Activated CD8-positive, alpha-beta T cell treated with anti-CD3 and anti-CD28 coated beads, Interleukin-2, amount 10 ng/mL, durations not matched to agents 7 days and 5 days (primary cell): ENCODE measurements at regions of chr9 and their contacts with region 1.

Region 1: GRCh38 chr9:33374634-33375213 is 27.6 kb downstream of the AQP7 start:
- DNase-seq: peak; percentile 81
- ATAC-seq: peak; percentile 85
- H3K4me3 Mint-ChIP-seq: no peak overlapping the region
- H3K27ac Mint-ChIP-seq: peak overlapping the region; percentile 35
- H3K4me1 Mint-ChIP-seq: peaks cover 12% of the 10 kb centered on the region
- H3K27me3 Mint-ChIP-seq: no peaks in the 10 kb centered on the region

Region 2: GRCh38 chr9:33170464-33171415 is 204.0 kb before region 1 on chr9:
- CTCF ChIA-PET with region 1: no interaction called
- POLR2A ChIA-PET with region 1: no interaction called
- DNase-seq: peak; percentile 64
- ATAC-seq: no peak
- H3K4me3 Mint-ChIP-seq: no peak overlapping the region
- H3K27ac Mint-ChIP-seq: no peak overlapping the region
- H3K4me1 Mint-ChIP-seq: peaks cover 24% of the 10 kb centered on the region
- H3K27me3 Mint-ChIP-seq: no peaks in the 10 kb centered on the region

Region 3: DNA sequence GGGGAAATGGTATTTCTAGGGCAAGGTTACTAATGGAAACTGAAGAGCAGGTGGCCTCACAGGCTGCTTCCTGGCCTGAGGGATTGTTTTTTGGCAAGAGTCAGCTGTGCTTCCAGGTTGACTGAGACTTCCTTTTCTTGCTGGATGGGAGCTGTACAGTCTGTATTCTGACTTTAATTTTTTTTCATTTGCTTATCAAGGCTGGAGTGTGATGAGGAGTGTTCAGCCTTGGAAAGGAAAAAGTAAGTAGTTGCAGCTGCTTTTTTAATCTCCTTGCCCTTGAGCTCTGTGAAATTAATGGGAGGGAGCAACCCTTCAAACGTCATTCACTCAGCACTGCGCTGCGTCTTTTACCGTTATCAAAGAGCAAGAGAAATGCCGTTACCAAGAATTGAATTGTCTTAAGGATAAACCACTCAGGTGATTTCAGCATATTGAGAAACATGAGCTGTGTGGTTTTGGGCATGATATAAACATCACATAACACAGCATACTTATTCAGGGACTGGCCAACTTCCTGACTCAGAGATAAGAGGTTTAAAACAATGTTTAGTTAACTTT is 20.0 kb before region 1 on chr9:
- CTCF ChIA-PET with region 1: interaction called, 22 read pairs
- POLR2A ChIA-PET with region 1: no interaction called
- DNase-seq: no peak
- ATAC-seq: no peak
- H3K4me3 Mint-ChIP-seq: no peak overlapping the region
- H3K27ac Mint-ChIP-seq: peak overlapping the region; percentile 15
- H3K4me1 Mint-ChIP-seq: no peaks in the 10 kb centered on the region
- H3K27me3 Mint-ChIP-seq: no peaks in the 10 kb centered on the region

Region 4: DNA sequence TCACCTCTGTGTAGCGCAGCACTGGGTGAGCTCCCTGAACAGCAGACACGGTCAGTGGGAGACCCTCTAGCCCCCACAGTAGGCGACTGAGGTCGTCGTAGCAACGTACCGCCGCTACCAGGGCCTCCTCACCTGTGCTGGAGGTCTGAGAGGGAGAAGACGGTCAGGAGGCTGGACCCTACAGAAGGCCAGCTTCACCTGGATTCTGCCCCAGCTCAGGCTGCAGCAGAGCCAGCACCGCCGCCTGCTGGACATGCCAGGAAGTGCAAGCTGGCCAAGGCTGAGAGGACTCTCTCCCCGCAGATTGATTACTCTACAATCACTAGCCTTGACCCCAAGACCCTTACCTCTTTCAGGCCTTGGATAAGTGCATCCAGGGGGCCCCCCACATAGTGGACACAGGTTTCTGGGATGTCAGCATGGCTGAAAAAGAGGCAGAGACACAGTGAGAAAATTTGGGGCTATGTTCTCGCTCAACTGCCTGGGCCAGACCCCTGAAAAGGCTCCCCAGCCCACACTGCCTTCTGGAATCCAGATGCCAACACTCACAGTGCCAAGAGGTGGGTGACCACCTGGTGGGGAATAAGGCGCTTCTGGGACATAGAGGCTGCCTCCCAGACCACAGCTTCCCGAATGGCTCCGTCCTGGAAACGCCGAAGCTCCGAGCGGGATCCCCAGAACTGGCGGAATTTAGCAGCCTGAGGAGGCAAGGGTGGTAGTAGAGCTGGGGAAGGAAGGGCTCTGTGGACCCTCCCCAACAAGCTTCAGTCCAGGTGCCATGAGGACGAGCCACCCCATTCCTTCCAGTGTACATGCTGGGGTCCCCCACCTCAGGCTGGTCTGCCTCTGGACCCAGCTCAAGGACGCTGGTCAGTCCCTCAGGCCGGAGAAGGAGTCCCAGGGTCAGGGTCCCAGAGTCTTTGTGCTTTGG is 92.1 kb after region 1 on chr9:
- CTCF ChIA-PET with region 1: interaction called, 76 read pairs
- POLR2A ChIA-PET with region 1: no interaction called
- DNase-seq: peak; percentile 79
- ATAC-seq: peak; percentile 71
- H3K4me3 Mint-ChIP-seq: no peak overlapping the region
- H3K27ac Mint-ChIP-seq: peak overlapping the region; percentile 25
- H3K4me1 Mint-ChIP-seq: peaks cover 7% of the 10 kb centered on the region
- H3K27me3 Mint-ChIP-seq: no peaks in the 10 kb centered on the region

Region 5: DNA sequence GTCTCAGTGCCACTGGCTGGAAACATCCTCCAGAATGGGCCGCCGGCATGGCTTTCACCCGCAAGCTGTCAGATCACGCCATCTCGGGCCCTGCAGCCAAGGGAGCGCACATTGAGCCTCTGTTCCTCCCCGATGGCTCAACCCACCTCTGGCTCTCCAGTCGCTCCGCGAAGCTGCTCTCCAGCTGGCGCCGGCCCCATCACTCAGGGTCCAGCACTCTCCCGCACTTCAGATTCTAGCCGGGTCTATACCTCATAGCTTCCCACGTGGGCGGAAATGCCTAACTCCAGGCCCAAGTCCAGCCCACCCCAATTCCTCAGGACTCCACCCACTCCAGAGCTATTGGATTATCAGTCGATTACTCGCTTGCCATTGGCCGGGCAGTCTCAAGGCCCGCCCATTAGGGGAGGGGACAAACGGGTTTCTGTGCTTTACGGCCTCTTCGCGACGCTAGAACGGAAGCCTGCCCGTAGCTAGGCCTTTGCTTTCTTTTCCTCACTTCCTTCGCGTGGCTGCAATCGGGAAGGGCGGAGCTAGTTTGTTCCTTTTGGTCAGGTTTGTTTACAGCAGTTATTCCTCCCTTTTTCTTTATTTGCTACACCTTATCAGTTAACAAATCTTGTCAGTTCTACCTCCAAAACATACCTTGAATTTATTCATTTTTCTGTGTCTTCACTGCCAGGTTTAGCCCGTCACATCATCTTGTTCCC is 99.1 kb after region 1 on chr9 and contains the start of gene NOL6:
- CTCF ChIA-PET with region 1: interaction called, 60 read pairs
- POLR2A ChIA-PET with region 1: no interaction called
- DNase-seq: peak; percentile 99
- ATAC-seq: peak; percentile 100
- H3K4me3 Mint-ChIP-seq: peak within 1 kb of the TSS; percentile 98
- H3K27ac Mint-ChIP-seq: peak within 1 kb of the TSS; percentile 95
- H3K4me1 Mint-ChIP-seq: peaks cover 28% of the 10 kb centered on the region
- H3K27me3 Mint-ChIP-seq: no peaks in the 10 kb centered on the region
- total RNA-seq, gene NOL6: 37.1 to 38.8 TPM